ENCODE measurements at regions of chr10 and their contacts with region 1.

Region 1: DNA sequence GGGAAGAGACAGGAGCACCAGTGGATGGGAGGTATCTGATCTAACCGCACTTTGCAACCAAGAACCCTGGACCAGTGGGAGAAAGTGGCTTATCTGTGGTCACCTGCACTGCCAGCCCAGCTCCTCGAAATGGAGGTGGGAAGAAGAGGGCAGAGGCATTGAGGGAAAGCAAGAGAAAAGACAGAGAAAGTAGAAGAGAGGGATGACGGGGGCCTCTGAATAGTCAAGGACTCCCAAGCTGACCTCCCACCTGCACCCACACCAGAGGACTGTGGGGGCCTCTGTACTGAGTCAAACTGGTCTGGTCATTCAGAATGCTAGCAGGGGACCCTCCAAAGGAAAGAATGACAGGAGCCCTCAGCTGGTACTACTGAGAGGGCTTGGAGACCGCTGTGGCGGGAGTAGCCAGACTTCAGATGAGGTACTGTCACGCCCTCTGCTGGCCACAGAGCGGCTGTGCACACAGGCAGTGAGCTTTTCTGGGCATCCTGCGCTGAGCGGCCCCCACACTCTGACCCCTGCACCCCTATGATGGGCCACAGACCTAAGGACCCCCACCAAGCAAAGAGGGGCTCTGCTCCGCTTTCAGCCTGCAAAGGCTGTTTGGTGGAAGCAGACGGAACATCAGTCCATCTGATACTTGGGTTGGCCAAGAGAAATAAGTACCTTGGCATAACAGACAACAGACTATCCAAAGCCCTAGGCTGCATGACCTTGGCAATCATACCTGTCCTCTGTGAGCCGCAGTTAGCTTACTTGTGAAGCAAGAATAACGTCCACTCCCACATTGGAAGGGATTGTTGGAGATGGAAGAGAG is 112.9 kb downstream of the COL13A1 start:
- DNase-seq: peak; percentile 35
- ATAC-seq: peak; percentile 96
- H3K4me3 ChIP-seq: no peak overlapping the region
- H3K27ac ChIP-seq: no peak overlapping the region
- H3K4me1 ChIP-seq: no peaks in the 10 kb centered on the region
- H3K27me3 ChIP-seq: no peaks in the 10 kb centered on the region
- CTCF ChIP-seq: peak; percentile 91 to 95 (median 91)
- POLR2A ChIP-seq: no peak
- RAD21 ChIP-seq: peak; percentile 94

Region 2: GRCh38 chr10:69742928-69743602 is 171.5 kb before region 1 on chr10:
- CTCF ChIA-PET with region 1: interaction called, 28 read pairs
- POLR2A ChIA-PET with region 1: no interaction called
- RAD21 ChIA-PET with region 1: interaction called in 1 of 2 experiments, 11 read pairs
- intact Hi-C with region 1: loop called (anchors 1 kb)
- DNase-seq: peak; percentile 18
- ATAC-seq: peak; percentile 97
- H3K4me3 ChIP-seq: no peak overlapping the region
- H3K27ac ChIP-seq: no peak overlapping the region
- H3K4me1 ChIP-seq: peaks cover 0 to 11% of the 10 kb centered on the region in 2 experiments; a peak in 1 of 4 replicates
- H3K27me3 ChIP-seq: no peaks in the 10 kb centered on the region
- CTCF ChIP-seq: peak; percentile 52 to 77 (median 73); a peak in 5 of 6 replicates
- POLR2A ChIP-seq: no peak
- RAD21 ChIP-seq: peak; percentile 66

Region 3: GRCh38 chr10:69786791-69787190 is 127.8 kb before region 1 on chr10:
- CTCF ChIA-PET with region 1: interaction called, 120 read pairs
- POLR2A ChIA-PET with region 1: no interaction called
- RAD21 ChIA-PET with region 1: interaction called, 11 to 17 read pairs
- intact Hi-C with region 1: loop called (anchors 1 kb)
- DNase-seq: no peak
- ATAC-seq: peak; percentile 85
- H3K4me3 ChIP-seq: no peak overlapping the region
- H3K27ac ChIP-seq: no peak overlapping the region
- H3K4me1 ChIP-seq: no peaks in the 10 kb centered on the region
- H3K27me3 ChIP-seq: peaks cover 16% of the 10 kb centered on the region
- CTCF ChIP-seq: peak; percentile 42 to 73 (median 49); a peak in 5 of 6 replicates
- POLR2A ChIP-seq: no peak
- RAD21 ChIP-seq: peak; percentile 81

Region 4: GRCh38 chr10:69885379-69886013 is 29.1 kb before region 1 on chr10:
- CTCF ChIA-PET with region 1: interaction called, 38 read pairs
- POLR2A ChIA-PET with region 1: no interaction called
- RAD21 ChIA-PET with region 1: interaction called, 5 to 7 read pairs
- intact Hi-C with region 1: loop called (anchors 2 kb)
- DNase-seq: no peak
- ATAC-seq: peak; percentile 63
- H3K4me3 ChIP-seq: no peak overlapping the region
- H3K27ac ChIP-seq: no peak overlapping the region
- H3K4me1 ChIP-seq: peaks cover 0 to 3% of the 10 kb centered on the region in 2 experiments; a peak in 1 of 4 replicates
- H3K27me3 ChIP-seq: no peaks in the 10 kb centered on the region
- CTCF ChIP-seq: peak in 2 of 3 experiments; percentile 44 to 54; a peak in 4 of 6 replicates
- POLR2A ChIP-seq: no peak
- RAD21 ChIP-seq: no peak

Region 5: GRCh38 chr10:69901628-69902505 is 12.7 kb before region 1 on chr10:
- CTCF ChIA-PET with region 1: interaction called, 11 read pairs
- POLR2A ChIA-PET with region 1: no interaction called
- RAD21 ChIA-PET with region 1: interaction called in 1 of 2 experiments, 3 read pairs
- intact Hi-C with region 1: no loop called
- DNase-seq: peak; percentile 28
- ATAC-seq: peak; percentile 98
- H3K4me3 ChIP-seq: no peak overlapping the region
- H3K27ac ChIP-seq: no peak overlapping the region
- H3K4me1 ChIP-seq: peaks cover 0 to 9% of the 10 kb centered on the region in 2 experiments; a peak in 3 of 4 replicates
- H3K27me3 ChIP-seq: no peaks in the 10 kb centered on the region
- CTCF ChIP-seq: peak; percentile 38 to 78 (median 75); a peak in 5 of 6 replicates
- POLR2A ChIP-seq: no peak
- RAD21 ChIP-seq: peak; percentile 42